Ascending aorta (tissue), 2 donors: ENCODE measurements at regions of chr17 and their contacts with region 1.

Region 1: DNA sequence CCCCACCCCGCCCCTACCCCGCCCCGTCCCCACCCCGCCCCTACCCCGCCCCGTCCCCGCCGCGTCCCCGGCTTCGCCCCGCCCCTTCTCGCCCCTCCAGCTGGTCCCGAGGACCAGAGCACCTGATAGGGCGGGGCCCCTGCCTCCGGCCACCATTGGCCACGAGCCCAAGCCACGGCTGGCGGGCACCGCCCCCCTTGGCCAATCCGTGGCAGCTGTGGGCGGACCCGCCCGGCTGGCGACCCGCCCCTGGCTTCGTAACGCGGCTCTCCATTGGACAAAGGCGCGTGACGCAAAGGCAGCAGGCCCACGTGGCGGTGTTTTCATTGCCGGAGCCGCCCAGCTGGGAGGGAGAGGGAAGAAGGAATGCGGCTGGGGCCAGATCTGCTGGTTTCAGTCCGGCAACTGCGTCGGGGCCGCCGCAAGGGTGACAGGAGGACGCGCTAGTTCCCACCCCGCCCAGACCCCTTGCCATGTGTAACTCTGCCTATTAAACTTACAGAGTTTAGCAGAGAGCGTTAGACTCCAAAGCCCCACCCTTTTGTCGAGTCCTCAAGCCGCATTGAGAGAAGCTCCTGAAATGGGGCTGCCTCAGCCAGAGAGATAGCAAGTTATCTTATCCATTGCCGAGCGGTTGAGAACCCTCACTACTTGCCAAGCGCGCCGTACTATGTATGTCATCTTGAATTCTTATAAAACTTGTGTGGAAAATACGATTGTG is 403 bp upstream of the WIPI1 start:
- DNase-seq: peak; percentile 97 to 99
- H3K4me3 ChIP-seq: peak overlapping the region; percentile 64 to 100
- H3K27ac ChIP-seq: peak overlapping the region; percentile 96 to 100
- H3K4me1 ChIP-seq: peaks cover 10 to 17% of the 10 kb centered on the region in 2 donors
- H3K27me3 ChIP-seq: no peaks in the 10 kb centered on the region
- CTCF ChIP-seq: no peak

Region 2: GRCh38 chr17:67376737-67377487 is 1080.8 kb before region 1 on chr17 and contains the start of gene PITPNC1:
- intact Hi-C with region 1: loop called (anchors 5 kb)
- DNase-seq: peak; percentile 49 to 92
- H3K4me3 ChIP-seq: peak within 1 kb of the TSS; percentile 91 to 94
- H3K27ac ChIP-seq: peak within 1 kb of the TSS; percentile 88 to 95
- H3K4me1 ChIP-seq: peaks cover 0 to 16% of the 10 kb centered on the region in 2 donors
- H3K27me3 ChIP-seq: no peaks in the 10 kb centered on the region
- CTCF ChIP-seq: peak in 1 of 3 experiments; percentile 30
- total RNA-seq, gene PITPNC1: 10.9 TPM

Region 3: DNA sequence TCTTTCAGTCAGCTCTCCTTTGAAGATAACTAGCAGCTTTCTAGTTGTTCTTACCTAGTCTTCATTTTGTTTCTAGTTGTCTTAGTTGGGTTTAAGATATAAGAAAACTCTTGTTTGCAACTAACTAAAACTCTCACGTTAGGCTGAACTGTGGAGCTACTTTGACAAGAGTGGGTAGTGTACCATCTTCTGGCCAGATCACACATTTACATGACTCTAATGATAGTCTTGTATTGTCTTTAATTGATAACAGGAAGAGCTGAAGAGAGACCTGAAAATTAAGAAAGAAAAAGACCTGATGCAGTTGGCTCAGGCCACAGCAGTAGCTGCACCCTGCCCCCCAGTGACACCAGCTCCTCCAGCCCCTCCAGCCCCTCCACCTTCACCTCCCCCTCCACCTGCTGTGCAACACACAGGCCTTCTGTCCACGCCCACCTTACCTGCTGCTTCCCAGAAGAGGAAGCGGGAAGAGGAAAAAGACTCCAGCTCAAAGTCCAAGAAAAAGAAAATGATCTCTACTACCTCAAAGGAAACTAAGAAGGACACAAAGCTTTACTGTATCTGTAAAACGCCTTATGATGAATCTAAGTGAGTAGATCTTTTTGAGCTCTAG is 498.3 kb before region 1 on chr17:
- intact Hi-C with region 1: loop called (anchors 10 kb)
- DNase-seq: no peak
- H3K4me3 ChIP-seq: no peak overlapping the region
- H3K27ac ChIP-seq: no peak overlapping the region
- H3K4me1 ChIP-seq: no peaks in the 10 kb centered on the region
- H3K27me3 ChIP-seq: no peaks in the 10 kb centered on the region
- CTCF ChIP-seq: no peak

Region 4: DNA sequence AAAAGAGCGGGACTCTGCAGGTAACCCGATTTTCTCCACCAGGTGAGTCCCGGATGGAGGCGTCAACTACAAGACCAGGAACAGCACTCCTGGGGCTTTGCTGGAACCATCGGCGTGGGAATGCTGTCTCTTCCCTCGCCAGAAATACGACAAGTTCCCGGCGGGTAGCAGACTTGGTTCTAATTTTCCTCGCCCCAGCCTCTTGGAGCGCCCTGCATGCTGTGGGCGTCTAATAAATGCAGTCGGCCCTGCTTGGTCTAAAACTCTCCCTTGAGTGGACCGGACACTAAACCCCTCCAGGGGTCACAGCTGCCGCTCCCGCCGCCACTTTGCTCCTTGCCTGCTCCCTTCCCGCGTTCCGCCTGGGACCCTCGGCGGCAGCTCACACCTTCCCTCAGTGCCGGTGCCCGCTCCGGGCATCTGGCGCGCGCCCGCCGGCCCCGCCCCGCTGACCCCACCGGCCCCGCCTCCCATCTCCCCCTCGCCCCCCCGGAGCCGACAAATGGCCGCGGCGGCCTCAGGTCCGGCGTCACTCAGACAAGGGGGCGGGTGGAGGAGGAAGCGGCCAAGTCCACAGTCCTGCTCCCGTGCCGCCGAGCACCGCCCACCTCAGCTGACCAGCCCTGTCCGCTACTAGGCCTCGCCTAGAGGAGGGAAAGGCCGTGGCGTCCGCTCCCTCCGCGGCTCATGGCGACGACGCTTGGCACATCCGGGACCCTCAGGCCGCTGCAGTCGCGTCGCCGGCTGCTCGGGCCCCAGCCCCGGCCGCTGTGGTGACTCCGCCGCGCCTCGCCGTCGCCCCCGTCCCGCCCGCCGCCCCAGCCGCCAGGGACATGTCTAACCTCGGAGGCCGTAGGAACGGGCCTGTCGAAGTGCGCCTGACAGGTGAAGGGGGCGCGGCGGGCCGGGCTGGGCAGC is 356.4 kb before region 1 on chr17:
- intact Hi-C with region 1: loop called (anchors 5 kb)
- DNase-seq: peak; percentile 90 to 96
- H3K4me3 ChIP-seq: peak overlapping the region; percentile 83 to 94
- H3K27ac ChIP-seq: peak overlapping the region; percentile 83 to 88
- H3K4me1 ChIP-seq: peaks cover 0 to 12% of the 10 kb centered on the region in 2 donors
- H3K27me3 ChIP-seq: no peaks in the 10 kb centered on the region
- CTCF ChIP-seq: no peak

Region 5: DNA sequence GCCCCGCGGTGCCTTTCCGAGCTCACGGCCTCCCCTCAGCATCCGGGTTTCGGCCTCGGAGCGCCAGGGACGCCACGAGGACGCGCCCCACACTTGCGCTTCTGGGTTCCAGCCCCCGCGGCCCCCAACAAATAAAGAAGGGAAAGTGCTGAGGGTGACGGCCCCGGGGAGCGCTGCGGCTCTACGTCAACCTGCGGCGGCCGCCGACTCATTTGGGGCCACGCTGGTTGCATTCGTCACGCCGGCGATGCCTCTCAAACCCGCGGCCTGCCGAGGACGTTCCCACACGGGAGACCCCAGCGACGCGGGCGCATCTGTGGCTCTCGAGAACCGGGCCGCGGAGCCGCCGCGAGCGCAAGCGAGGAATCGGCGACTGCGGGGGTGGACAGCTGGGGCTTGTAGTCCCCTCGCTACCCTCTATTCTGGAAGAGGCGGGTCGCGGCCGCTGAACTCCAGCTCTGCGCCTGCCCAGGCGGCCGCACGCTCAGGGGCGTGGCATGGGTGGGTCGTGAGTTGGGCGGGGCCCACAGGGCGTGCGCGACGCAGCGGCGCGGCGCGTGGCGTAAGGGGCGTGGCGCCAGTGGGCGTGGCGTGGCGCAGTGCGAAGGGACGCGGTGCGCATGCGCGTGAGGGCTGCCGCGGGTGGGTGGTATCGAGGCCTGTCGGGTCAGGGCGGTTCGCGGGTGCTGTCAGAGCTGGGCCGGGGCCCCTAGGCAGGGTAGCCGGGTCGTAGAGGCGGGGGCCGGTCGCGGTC is 210.1 kb before region 1 on chr17 and contains the start of gene AMZ2:
- intact Hi-C with region 1: loop called (anchors 1 kb)
- DNase-seq: peak; percentile 72 to 95
- H3K4me3 ChIP-seq: peak within 1 kb of the TSS; percentile 83 to 90
- H3K27ac ChIP-seq: peak within 1 kb of the TSS; percentile 96 to 97
- H3K4me1 ChIP-seq: peaks cover 0 to 14% of the 10 kb centered on the region in 2 donors
- H3K27me3 ChIP-seq: no peaks in the 10 kb centered on the region
- CTCF ChIP-seq: no peak
- total RNA-seq, gene AMZ2: 41.6 TPM

Region 6: GRCh38 chr17:68435876-68436842 is 21.5 kb before region 1 on chr17:
- intact Hi-C with region 1: loop called (anchors 2 kb)
- DNase-seq: peak in 1 of 2 donors; percentile 85
- H3K4me3 ChIP-seq: no peak overlapping the region
- H3K27ac ChIP-seq: no peak overlapping the region
- H3K4me1 ChIP-seq: no peaks in the 10 kb centered on the region
- H3K27me3 ChIP-seq: no peaks in the 10 kb centered on the region
- CTCF ChIP-seq: peak; percentile 78 to 89 (median 87)

Region 7: DNA sequence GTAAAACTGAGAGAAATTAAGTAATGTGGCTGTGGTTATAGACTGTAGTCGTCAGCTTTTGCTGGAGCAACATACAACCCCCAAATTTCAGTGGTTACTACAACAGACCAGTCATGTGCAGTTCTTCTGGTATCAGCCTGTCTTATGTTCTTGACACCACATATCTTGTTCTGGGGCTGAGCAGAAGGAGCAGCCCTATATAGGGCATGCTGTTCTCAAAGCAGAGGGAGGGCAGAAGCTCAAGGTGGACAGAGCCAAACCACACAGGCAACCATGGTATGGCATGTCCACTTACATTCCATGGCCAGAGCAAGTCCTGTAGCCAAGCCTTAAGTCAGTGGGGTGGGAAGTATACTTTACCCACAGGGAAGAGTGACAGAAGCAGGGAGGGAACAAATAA is 62.2 kb after region 1 on chr17:
- intact Hi-C with region 1: no loop called
- DNase-seq: no peak
- H3K4me3 ChIP-seq: no peak overlapping the region
- H3K27ac ChIP-seq: no peak overlapping the region
- H3K4me1 ChIP-seq: peaks cover 0 to 13% of the 10 kb centered on the region in 2 donors
- H3K27me3 ChIP-seq: no peaks in the 10 kb centered on the region
- CTCF ChIP-seq: no peak

Region 8: DNA sequence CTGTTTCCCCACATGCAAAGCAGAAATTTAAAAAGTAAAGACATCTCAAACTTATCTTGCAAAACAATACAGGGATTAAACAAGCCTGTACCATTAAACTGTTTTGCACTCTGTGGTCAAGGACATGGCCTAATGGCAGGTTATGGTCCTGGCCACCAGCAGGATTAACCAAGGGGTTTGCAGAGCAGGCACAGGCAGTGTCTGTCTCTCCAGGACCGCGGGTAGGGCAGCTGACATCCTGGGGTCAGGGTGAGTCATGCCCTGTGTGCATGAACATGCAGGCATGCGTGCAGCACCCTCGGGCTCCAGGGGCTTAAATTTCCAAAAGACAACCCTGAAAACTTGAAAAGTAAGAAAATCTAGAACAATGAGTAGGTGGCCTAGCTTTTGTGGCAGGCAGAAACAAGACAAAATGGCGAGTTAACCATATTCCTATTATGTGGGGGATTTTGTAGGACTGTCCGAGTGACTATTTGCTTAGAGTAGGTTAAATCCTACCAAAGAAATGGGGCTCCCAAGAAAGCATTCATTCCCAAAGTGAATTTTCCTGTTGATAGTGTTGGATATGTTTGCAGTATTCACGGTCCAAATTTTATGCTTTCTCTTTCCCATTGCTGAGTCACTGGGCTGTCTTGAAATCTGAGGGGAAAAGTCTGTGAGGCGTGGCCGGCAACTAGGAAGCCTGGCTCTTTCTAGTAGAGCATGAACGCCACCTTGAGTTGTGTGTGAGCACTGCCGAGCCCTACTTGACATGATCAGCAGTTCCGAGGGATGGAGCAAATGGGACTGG is 301.8 kb after region 1 on chr17:
- intact Hi-C with region 1: loop called (anchors 5 kb)
- DNase-seq: peak; percentile 74 to 95
- H3K4me3 ChIP-seq: peak overlapping the region; percentile 48 to 55
- H3K27ac ChIP-seq: peak overlapping the region; percentile 57 to 73
- H3K4me1 ChIP-seq: peaks cover 0 to 7% of the 10 kb centered on the region in 2 donors
- H3K27me3 ChIP-seq: no peaks in the 10 kb centered on the region
- CTCF ChIP-seq: peak; percentile 84 to 91 (median 90)